Sciatic nerve (tissue), 2 donors: ENCODE measurements at regions of chr7 and their contacts with region 1.

Region 1: DNA sequence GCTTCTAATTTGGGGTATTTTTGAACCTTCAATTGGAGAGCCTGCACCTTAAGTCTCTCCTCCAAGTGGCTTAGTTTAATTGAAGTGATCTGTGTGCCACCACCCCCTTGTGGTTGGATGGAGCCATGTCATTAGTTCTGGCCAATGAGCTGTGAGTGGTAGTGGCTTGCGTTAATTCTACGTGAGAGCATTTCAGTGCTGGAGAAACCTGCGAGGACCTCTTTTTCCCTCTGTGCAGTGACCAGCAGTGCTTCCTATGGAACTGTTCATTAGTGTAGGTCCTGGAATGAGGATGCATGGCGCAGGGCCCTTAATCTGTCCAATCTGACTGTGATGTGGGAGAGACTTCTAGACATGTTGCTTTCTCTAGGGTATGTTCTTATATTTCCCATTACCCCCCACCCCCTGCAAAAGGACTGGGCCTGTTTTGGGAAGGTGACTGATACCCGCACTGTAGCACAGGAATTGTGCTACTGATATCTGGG is 3.8 kb downstream of the HILPDA start:
- DNase-seq: no peak
- ATAC-seq: peak; percentile 40

Region 2: GRCh38 chr7:126541406-126541805 is 1918.0 kb before region 1 on chr7:
- intact Hi-C with region 1: no loop called
- DNase-seq: no peak
- ATAC-seq: no peak

Region 3: GRCh38 chr7:128427289-128427891 is 32.0 kb before region 1 on chr7:
- intact Hi-C with region 1: loop called (anchors 1 kb)
- DNase-seq: no peak
- ATAC-seq: peak; percentile 49